ENCODE measurements at regions of chr6 and their contacts with region 1.

Region 1: GRCh38 chr6:130752267-130752666 is 74.9 kb upstream of the SMLR1 start:
- DNase-seq: no peak
- ATAC-seq: no peak
- H3K4me3 ChIP-seq: no peak overlapping the region
- H3K27ac ChIP-seq: no peak overlapping the region
- H3K4me1 ChIP-seq: no peaks in the 10 kb centered on the region
- H3K27me3 ChIP-seq: no peaks in the 10 kb centered on the region
- CTCF ChIP-seq: no peak
- EP300 ChIP-seq: no peak
- POLR2A ChIP-seq: no peak
- RAD21 ChIP-seq: no peak

Region 2: DNA sequence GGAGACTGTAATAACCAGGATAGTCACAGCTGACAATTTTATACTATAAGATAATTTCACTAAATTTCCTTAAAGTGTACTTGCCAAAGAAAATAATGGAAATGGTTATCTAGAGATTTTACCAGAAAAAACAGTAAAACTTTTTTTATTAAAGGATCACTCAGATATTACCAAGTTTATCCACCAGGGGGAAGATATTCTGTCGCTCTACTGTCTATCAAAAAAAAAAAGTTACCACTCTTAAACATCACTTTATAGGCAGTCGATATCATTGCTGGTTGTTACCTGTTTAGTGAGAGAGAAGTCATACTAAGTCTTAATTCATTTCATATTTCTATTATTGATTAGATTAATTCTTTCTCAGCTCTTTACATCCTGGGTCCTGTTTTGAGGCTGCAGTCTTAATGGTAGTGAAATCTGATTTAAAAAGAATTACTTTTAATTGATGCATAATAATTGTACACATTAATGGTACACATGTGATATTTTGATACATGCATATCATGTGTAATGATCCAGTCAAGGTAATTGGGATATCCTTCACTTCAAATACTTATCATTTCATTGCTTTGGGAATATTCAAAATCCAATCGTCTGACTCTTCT is 715.0 kb before region 1 on chr6:
- CTCF ChIA-PET with region 1: no interaction called
- POLR2A ChIA-PET with region 1: no interaction called
- RAD21 ChIA-PET with region 1: no interaction called
- SMC1A ChIA-PET with region 1: no interaction called
- in situ Hi-C with region 1: no loop called
- intact Hi-C with region 1: loop called (anchors 10 kb)
- DNase-seq: no peak
- ATAC-seq: peak; percentile 61
- H3K4me3 ChIP-seq: no peak overlapping the region
- H3K27ac ChIP-seq: no peak overlapping the region
- H3K4me1 ChIP-seq: peaks cover 3% of the 10 kb centered on the region
- H3K27me3 ChIP-seq: no peaks in the 10 kb centered on the region
- CTCF ChIP-seq: peak in 2 of 3 experiments; percentile 31 to 39; a peak in 4 of 6 replicates
- EP300 ChIP-seq: no peak
- POLR2A ChIP-seq: no peak
- RAD21 ChIP-seq: no peak

Region 3: DNA sequence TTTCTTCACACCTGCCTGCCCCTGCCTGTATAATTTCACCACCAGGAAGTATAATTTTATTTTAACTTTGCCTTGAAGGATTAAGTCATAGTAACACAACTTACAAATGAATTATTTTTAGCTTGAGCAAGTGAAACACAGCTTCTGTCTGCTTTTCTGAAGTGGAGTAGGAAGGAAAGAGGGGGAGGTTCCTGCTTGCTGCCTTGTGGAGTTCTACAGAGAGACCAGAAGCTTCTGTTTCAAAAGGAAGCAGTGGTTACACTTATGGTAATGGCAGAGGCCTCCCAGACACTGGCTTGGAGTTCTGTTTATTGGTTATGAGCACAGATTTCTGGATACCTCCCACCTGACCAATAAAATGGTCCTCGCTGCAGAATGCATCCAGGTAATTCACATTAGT is 226.9 kb before region 1 on chr6:
- CTCF ChIA-PET with region 1: no interaction called
- POLR2A ChIA-PET with region 1: no interaction called
- RAD21 ChIA-PET with region 1: no interaction called
- SMC1A ChIA-PET with region 1: no interaction called
- in situ Hi-C with region 1: no loop called
- intact Hi-C with region 1: no loop called
- DNase-seq: no peak
- ATAC-seq: peak; percentile 64
- H3K4me3 ChIP-seq: no peak overlapping the region
- H3K27ac ChIP-seq: no peak overlapping the region
- H3K4me1 ChIP-seq: peaks cover 2% of the 10 kb centered on the region; the same call in 1 of the 2 replicates
- H3K27me3 ChIP-seq: no peaks in the 10 kb centered on the region
- CTCF ChIP-seq: no peak
- EP300 ChIP-seq: no peak
- POLR2A ChIP-seq: no peak
- RAD21 ChIP-seq: peak; percentile 24; the same call in 1 of the 2 replicates

Region 4: GRCh38 chr6:130730600-130730999 is 21.7 kb before region 1 on chr6:
- CTCF ChIA-PET with region 1: no interaction called
- POLR2A ChIA-PET with region 1: no interaction called
- RAD21 ChIA-PET with region 1: no interaction called
- SMC1A ChIA-PET with region 1: no interaction called
- in situ Hi-C with region 1: no loop called
- intact Hi-C with region 1: no loop called
- DNase-seq: no peak
- ATAC-seq: 0 out of 3 replicates have a peak, but pooled peaks have one; percentile 27
- H3K4me3 ChIP-seq: no peak overlapping the region
- H3K27ac ChIP-seq: no peak overlapping the region
- H3K4me1 ChIP-seq: no peaks in the 10 kb centered on the region
- H3K27me3 ChIP-seq: no peaks in the 10 kb centered on the region
- CTCF ChIP-seq: no peak
- EP300 ChIP-seq: no peak
- POLR2A ChIP-seq: no peak
- RAD21 ChIP-seq: no peak

Region 5: GRCh38 chr6:130776287-130776925 is 24.1 kb after region 1 on chr6:
- CTCF ChIA-PET with region 1: interaction called, 3 read pairs
- POLR2A ChIA-PET with region 1: no interaction called
- RAD21 ChIA-PET with region 1: no interaction called
- SMC1A ChIA-PET with region 1: interaction called, 11 read pairs
- in situ Hi-C with region 1: no loop called
- intact Hi-C with region 1: no loop called
- DNase-seq: peak; percentile 51
- ATAC-seq: peak; percentile 94
- H3K4me3 ChIP-seq: 0 out of 2 replicates have a peak overlapping the region, but pooled peaks have one; percentile 9
- H3K27ac ChIP-seq: no peak overlapping the region
- H3K4me1 ChIP-seq: peaks cover 10% of the 10 kb centered on the region
- H3K27me3 ChIP-seq: no peaks in the 10 kb centered on the region
- CTCF ChIP-seq: no peak
- EP300 ChIP-seq: no peak
- POLR2A ChIP-seq: no peak
- RAD21 ChIP-seq: no peak

Region 6: GRCh38 chr6:130997061-130997753 is 244.9 kb after region 1 on chr6:
- CTCF ChIA-PET with region 1: no interaction called
- POLR2A ChIA-PET with region 1: no interaction called
- RAD21 ChIA-PET with region 1: no interaction called
- SMC1A ChIA-PET with region 1: no interaction called
- in situ Hi-C with region 1: no loop called
- intact Hi-C with region 1: no loop called
- DNase-seq: no peak
- ATAC-seq: no peak
- H3K4me3 ChIP-seq: no peak overlapping the region
- H3K27ac ChIP-seq: no peak overlapping the region
- H3K4me1 ChIP-seq: no peaks in the 10 kb centered on the region
- H3K27me3 ChIP-seq: no peaks in the 10 kb centered on the region
- CTCF ChIP-seq: no peak
- EP300 ChIP-seq: no peak
- POLR2A ChIP-seq: no peak
- RAD21 ChIP-seq: no peak

Measured in GM12878 (cell line).